Naive thymus-derived CD4-positive, alpha-beta T cell (primary cell): ENCODE measurements at regions of chr4 and their contacts with region 1.

Region 1: DNA sequence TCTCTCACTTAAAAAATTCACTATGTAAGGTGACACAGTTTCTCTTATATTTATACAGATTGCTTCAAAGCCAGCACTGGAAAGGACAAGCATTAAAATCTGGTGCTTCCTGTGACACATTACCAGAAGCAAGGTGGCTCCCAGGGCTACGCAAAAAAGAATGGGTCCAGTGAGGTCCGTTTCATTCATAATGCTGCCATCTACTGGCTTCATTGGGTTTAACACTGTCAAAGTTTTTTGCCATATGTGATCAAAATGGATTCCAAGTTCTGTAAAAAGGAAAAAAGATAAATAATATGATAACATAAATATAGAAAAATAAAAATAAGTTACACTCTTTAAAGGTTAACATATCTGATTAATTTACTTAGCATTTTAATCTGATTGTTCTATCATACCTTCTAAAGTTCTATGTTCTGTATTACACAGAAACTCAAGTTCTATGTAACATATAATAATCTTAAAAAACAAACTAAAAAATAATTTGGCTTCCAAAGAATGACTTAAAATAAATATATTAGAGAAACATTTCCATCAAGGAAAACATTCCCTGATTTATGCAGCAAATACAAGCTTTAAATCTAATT is 22.1 kb downstream of the YIPF7 start:
- DNase-seq: peak in 8 of 9 donors; percentile 11 to 46 (median 31)
- ATAC-seq: peak; percentile 85
- H3K4me3 ChIP-seq: no peak overlapping the region
- H3K4me3 Mint-ChIP-seq: no peak overlapping the region
- H3K27ac ChIP-seq: no peak overlapping the region
- H3K27ac Mint-ChIP-seq: no peak overlapping the region
- H3K4me1 ChIP-seq: no peaks in the 10 kb centered on the region
- H3K4me1 Mint-ChIP-seq: peaks cover 0 to 4% (median 0%) of the 10 kb centered on the region in 7 donors
- H3K27me3 ChIP-seq: no peaks in the 10 kb centered on the region
- H3K27me3 Mint-ChIP-seq: peaks cover 0 to 4% (median 0%) of the 10 kb centered on the region in 5 donors

Region 2: GRCh38 chr4:42995343-42995944 is 1633.9 kb before region 1 on chr4:
- CTCF ChIA-PET with region 1: no interaction called
- POLR2A ChIA-PET with region 1: no interaction called
- intact Hi-C with region 1: loop called in 1 of 2 experiments (anchors 10 kb)
- DNase-seq: no peak
- ATAC-seq: no peak
- H3K4me3 ChIP-seq: no peak overlapping the region
- H3K4me3 Mint-ChIP-seq: no peak overlapping the region
- H3K27ac ChIP-seq: no peak overlapping the region
- H3K27ac Mint-ChIP-seq: no peak overlapping the region
- H3K4me1 ChIP-seq: no peaks in the 10 kb centered on the region
- H3K4me1 Mint-ChIP-seq: no peaks in the 10 kb centered on the region
- H3K27me3 ChIP-seq: no peaks in the 10 kb centered on the region
- H3K27me3 Mint-ChIP-seq: peaks cover 0 to 7% (median 0%) of the 10 kb centered on the region in 5 donors

Region 3: GRCh38 chr4:43132010-43132582 is 1497.3 kb before region 1 on chr4:
- CTCF ChIA-PET with region 1: no interaction called
- POLR2A ChIA-PET with region 1: no interaction called
- intact Hi-C with region 1: loop called (anchors 1 to 5 kb)
- DNase-seq: peak in 2 of 9 donors; percentile 3 to 26
- ATAC-seq: no peak
- H3K4me3 ChIP-seq: no peak overlapping the region
- H3K4me3 Mint-ChIP-seq: no peak overlapping the region
- H3K27ac ChIP-seq: no peak overlapping the region
- H3K27ac Mint-ChIP-seq: no peak overlapping the region
- H3K4me1 ChIP-seq: no peaks in the 10 kb centered on the region
- H3K4me1 Mint-ChIP-seq: peaks cover 0 to 4% (median 0%) of the 10 kb centered on the region in 7 donors
- H3K27me3 ChIP-seq: no peaks in the 10 kb centered on the region
- H3K27me3 Mint-ChIP-seq: no peaks in the 10 kb centered on the region

Region 4: GRCh38 chr4:44448548-44449461 is 180.6 kb before region 1 on chr4 and contains the start of gene KCTD8:
- CTCF ChIA-PET with region 1: no interaction called
- POLR2A ChIA-PET with region 1: no interaction called
- intact Hi-C with region 1: loop called in 1 of 2 experiments (anchors 5 kb)
- DNase-seq: peak; percentile 4 to 73 (median 12)
- ATAC-seq: peak; percentile 63
- H3K4me3 ChIP-seq: no peak within 1 kb of the TSS
- H3K4me3 Mint-ChIP-seq: peak within 1 kb of the TSS; percentile 55 to 83 (median 76)
- H3K27ac ChIP-seq: no peak within 1 kb of the TSS
- H3K27ac Mint-ChIP-seq: no peak within 1 kb of the TSS
- H3K4me1 ChIP-seq: no peaks in the 10 kb centered on the region
- H3K4me1 Mint-ChIP-seq: peaks cover 6 to 23% (median 17%) of the 10 kb centered on the region in 7 donors
- H3K27me3 ChIP-seq: peaks cover 11 to 19% of the 10 kb centered on the region in 2 donors
- H3K27me3 Mint-ChIP-seq: peaks cover 48 to 60% (median 58%) of the 10 kb centered on the region in 5 donors
- total RNA-seq, gene KCTD8: not detected

Region 5: DNA sequence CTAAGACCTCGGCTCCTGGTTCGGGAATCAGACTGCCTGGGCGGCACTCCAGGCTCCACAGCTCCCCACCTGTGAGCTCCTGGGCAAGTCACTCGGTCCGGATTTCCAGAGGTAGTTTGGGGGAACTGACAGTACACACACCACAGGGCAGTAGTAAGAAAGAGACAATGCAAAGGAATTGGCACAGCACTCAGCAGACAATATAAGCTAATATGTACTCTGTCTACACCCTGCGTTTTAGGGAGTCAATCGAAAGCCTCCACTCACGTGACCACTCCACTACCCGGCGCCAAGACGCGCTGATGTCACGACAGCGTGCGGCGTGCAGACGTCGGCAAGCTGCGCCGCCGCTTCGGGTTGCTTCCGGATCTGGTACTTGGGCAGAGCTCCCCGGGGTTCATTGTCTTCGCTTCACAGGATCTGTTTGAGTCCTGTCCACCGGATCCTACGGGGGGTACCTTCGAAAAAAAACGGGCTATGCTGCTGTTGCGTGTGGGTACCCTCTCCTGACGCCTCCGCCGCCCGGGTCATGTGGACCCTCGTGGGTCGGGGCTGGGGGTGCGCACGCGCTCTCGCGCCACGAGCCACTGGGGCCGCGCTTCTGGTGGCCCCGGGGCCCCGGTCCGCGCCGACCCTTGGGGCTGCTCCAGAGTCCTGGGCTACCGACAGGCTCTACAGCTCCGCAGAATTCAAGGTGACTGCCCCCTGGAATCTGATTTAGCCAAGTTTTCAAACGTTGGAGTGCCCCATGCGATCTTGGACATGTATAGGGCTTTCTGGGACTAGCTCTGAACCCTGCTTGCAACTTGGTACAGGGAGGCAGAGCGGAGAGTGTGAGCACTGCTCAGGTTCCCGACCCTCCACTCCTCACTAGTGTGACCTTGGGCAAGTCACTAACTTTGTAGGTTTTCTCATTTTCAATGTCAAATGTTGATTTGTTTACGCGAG is 49.0 kb after region 1 on chr4 and contains the start of gene GUF1:
- CTCF ChIA-PET with region 1: no interaction called
- POLR2A ChIA-PET with region 1: no interaction called
- intact Hi-C with region 1: loop called in 1 of 2 experiments (anchors 1 kb)
- DNase-seq: peak; percentile 81 to 93 (median 91)
- ATAC-seq: peak; percentile 96
- H3K4me3 ChIP-seq: peak within 1 kb of the TSS; percentile 94
- H3K4me3 Mint-ChIP-seq: peak within 1 kb of the TSS; percentile 84 to 99 (median 98)
- H3K27ac ChIP-seq: peak within 1 kb of the TSS; percentile 98
- H3K27ac Mint-ChIP-seq: peak within 1 kb of the TSS; percentile 98 to 100 (median 99)
- H3K4me1 ChIP-seq: peaks cover 8 to 15% of the 10 kb centered on the region in 2 donors
- H3K4me1 Mint-ChIP-seq: peaks cover 9 to 56% (median 42%) of the 10 kb centered on the region in 7 donors
- H3K27me3 ChIP-seq: no peaks in the 10 kb centered on the region
- H3K27me3 Mint-ChIP-seq: peaks cover 0 to 2% (median 0%) of the 10 kb centered on the region in 5 donors
- total RNA-seq, gene GUF1: 15.5 to 26.0 (median 25.0) TPM